Breast epithelium (tissue), 4 donors: ENCODE measurements at regions of chr4 and their contacts with region 1.

Region 1: DNA sequence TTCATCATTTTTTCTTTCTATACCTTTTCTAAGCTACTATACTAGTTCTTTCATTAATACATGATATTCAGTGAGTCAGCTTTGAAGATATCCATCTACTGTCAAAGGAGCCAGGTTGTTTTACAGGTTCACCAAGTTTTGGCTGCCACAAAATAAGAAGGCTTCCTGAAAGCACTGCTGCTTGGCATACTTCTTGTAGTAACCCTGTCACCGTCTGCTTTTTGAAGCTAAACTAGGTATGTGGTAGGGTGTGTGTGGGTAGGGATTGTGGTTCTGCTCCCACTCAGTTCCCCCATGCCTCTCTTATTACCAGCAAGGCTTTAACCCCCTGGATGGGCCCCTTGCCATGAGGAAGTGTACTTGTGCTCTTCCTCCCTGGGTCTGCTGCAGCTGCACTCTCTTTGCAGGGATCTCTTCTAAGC is 191.2 kb downstream of the BANK1 start:
- DNase-seq: peak in 1 of 2 donors; percentile 45
- H3K4me3 ChIP-seq: no peak overlapping the region
- H3K27ac ChIP-seq: no peak overlapping the region
- H3K4me1 ChIP-seq: no peaks in the 10 kb centered on the region
- H3K27me3 ChIP-seq: no peaks in the 10 kb centered on the region
- CTCF ChIP-seq: no peak
- POLR2A ChIP-seq: no peak

Region 2: GRCh38 chr4:100641336-100641735 is 1340.4 kb before region 1 on chr4:
- intact Hi-C with region 1: no loop called
- DNase-seq: no peak
- H3K4me3 ChIP-seq: no peak overlapping the region
- H3K27ac ChIP-seq: no peak overlapping the region
- H3K4me1 ChIP-seq: no peaks in the 10 kb centered on the region
- H3K27me3 ChIP-seq: no peaks in the 10 kb centered on the region
- CTCF ChIP-seq: no peak
- POLR2A ChIP-seq: no peak

Region 3: GRCh38 chr4:101931618-101932017 is 50.1 kb before region 1 on chr4:
- intact Hi-C with region 1: loop called (anchors 2 kb)
- DNase-seq: no peak
- H3K4me3 ChIP-seq: no peak overlapping the region
- H3K27ac ChIP-seq: no peak overlapping the region
- H3K4me1 ChIP-seq: no peaks in the 10 kb centered on the region
- H3K27me3 ChIP-seq: no peaks in the 10 kb centered on the region
- CTCF ChIP-seq: no peak
- POLR2A ChIP-seq: no peak